Activated CD4-positive, alpha-beta T cell treated with anti-CD3 and anti-CD28 coated beads for 36 hours (primary cell): ENCODE measurements at regions of chr1 and their contacts with region 1.

Region 1: GRCh38 chr1:113140588-113141446 is 67.8 kb downstream of the LRIG2 start:
- DNase-seq: peak; percentile 78
- ATAC-seq: peak; percentile 86
- H3K4me3 Mint-ChIP-seq: no peak overlapping the region
- H3K27ac Mint-ChIP-seq: no peak overlapping the region
- H3K4me1 Mint-ChIP-seq: peaks cover 33% of the 10 kb centered on the region
- H3K27me3 Mint-ChIP-seq: no peaks in the 10 kb centered on the region

Region 2: DNA sequence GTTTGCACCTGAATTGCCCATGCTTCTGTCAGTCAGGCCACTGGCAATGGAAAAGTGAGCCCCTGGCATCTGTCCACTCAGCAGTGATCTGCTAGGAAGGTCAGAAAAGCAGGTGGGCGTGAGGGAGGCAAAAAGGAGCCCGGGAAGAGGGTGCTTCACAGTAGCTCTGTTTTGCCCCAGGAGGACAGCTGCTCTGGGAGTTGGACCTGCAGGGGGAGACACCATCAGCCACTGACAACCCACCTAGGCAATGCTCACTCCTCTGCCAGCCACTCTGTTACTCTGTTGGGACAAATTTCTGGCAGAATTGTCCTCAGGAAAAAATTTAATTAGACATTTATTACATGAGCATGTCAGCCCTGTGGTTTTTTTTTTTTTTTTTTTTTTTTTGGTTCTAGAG is 78.6 kb after region 1 on chr1:
- CTCF ChIA-PET with region 1: no interaction called
- POLR2A ChIA-PET with region 1: no interaction called
- intact Hi-C with region 1: no loop called
- DNase-seq: peak; percentile 15
- ATAC-seq: no peak
- H3K4me3 Mint-ChIP-seq: no peak overlapping the region
- H3K27ac Mint-ChIP-seq: no peak overlapping the region
- H3K4me1 Mint-ChIP-seq: no peaks in the 10 kb centered on the region
- H3K27me3 Mint-ChIP-seq: no peaks in the 10 kb centered on the region

Region 3: GRCh38 chr1:113452921-113453770 is 312.3 kb after region 1 on chr1:
- CTCF ChIA-PET with region 1: interaction called, 3 read pairs
- POLR2A ChIA-PET with region 1: no interaction called
- intact Hi-C with region 1: loop called (anchors 1 to 5 kb)
- DNase-seq: peak; percentile 32
- ATAC-seq: no peak
- H3K4me3 Mint-ChIP-seq: no peak overlapping the region
- H3K27ac Mint-ChIP-seq: no peak overlapping the region
- H3K4me1 Mint-ChIP-seq: no peaks in the 10 kb centered on the region
- H3K27me3 Mint-ChIP-seq: no peaks in the 10 kb centered on the region

Region 4: GRCh38 chr1:113677250-113678158 is 536.7 kb after region 1 on chr1:
- CTCF ChIA-PET with region 1: interaction called, 7 read pairs
- POLR2A ChIA-PET with region 1: no interaction called
- intact Hi-C with region 1: loop called (anchors 1 kb)
- DNase-seq: no peak
- ATAC-seq: peak; percentile 39
- H3K4me3 Mint-ChIP-seq: no peak overlapping the region
- H3K27ac Mint-ChIP-seq: no peak overlapping the region
- H3K4me1 Mint-ChIP-seq: no peaks in the 10 kb centered on the region
- H3K27me3 Mint-ChIP-seq: no peaks in the 10 kb centered on the region

Region 5: GRCh38 chr1:114282751-114283403 is 1142.1 kb after region 1 on chr1:
- CTCF ChIA-PET with region 1: no interaction called
- POLR2A ChIA-PET with region 1: no interaction called
- intact Hi-C with region 1: loop called in 1 of 2 experiments (anchors 5 kb)
- DNase-seq: peak; percentile 92
- ATAC-seq: peak; percentile 100
- H3K4me3 Mint-ChIP-seq: no peak overlapping the region
- H3K27ac Mint-ChIP-seq: no peak overlapping the region
- H3K4me1 Mint-ChIP-seq: peaks cover 8% of the 10 kb centered on the region
- H3K27me3 Mint-ChIP-seq: peaks cover 2% of the 10 kb centered on the region